GM12878 (cell line): ENCODE measurements at regions of chr10 and their contacts with region 1.

Region 1: DNA sequence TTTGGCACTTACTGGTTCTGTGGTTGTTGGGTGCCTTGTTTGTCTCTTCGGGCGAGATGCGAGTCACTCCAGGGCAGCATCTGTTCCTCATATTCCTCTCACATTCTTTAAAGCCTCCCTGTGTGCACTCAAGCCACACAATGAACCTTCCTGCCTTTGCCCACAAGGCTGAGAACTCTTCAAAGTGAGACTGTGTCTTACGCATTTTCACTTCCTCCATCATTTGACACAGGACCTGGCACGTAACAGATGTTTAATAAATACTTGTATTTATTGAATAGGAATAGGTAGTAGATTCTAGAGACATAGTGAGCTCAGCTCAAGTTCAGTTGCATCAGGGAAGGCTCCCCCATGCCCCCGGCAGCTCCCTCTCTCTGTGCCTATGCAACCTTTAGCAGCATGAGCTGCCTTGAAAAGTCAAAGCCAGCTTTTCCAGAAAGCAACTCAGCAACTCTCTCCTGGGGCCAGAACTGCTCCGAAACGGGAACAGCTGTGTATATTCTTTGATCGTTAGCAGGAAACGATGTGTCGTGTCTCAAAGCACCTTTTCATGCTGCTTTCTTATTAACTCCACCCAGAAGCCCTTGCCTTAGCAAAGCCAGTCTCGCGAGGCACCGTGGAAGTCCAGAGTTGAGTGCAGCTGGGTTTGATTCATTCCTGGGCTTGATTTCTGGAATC is 97.5 kb downstream of the PFKFB3 start:
- DNase-seq: peak; percentile 97
- ATAC-seq: peak; percentile 82
- H3K4me3 ChIP-seq: peak overlapping the region; percentile 34; the same call in 1 of the 2 replicates
- H3K27ac ChIP-seq: peak overlapping the region; percentile 70
- H3K4me1 ChIP-seq: peaks cover 31% of the 10 kb centered on the region
- H3K27me3 ChIP-seq: no peaks in the 10 kb centered on the region
- CTCF ChIP-seq: no peak
- EP300 ChIP-seq: peak; percentile 99 to 100
- POLR2A ChIP-seq: 0 out of 2 replicates have a peak, but pooled peaks have one; percentile 31
- RAD21 ChIP-seq: no peak; the same call in 1 of the 2 replicates

Region 2: GRCh38 chr10:6269953-6270867 is 30.0 kb before region 1 on chr10:
- CTCF ChIA-PET with region 1: interaction called, 12 read pairs
- POLR2A ChIA-PET with region 1: interaction called, 15 read pairs
- RAD21 ChIA-PET with region 1: interaction called, 37 read pairs
- SMC1A ChIA-PET with region 1: interaction called, 120 read pairs
- in situ Hi-C with region 1: no loop called
- intact Hi-C with region 1: loop called (anchors 1 kb)
- DNase-seq: peak; percentile 55
- ATAC-seq: peak; percentile 80
- H3K4me3 ChIP-seq: no peak overlapping the region
- H3K27ac ChIP-seq: peak overlapping the region; percentile 50
- H3K4me1 ChIP-seq: peaks cover 40% of the 10 kb centered on the region
- H3K27me3 ChIP-seq: no peaks in the 10 kb centered on the region
- CTCF ChIP-seq: no peak
- EP300 ChIP-seq: peak; percentile 98; a peak in 3 of 4 replicates
- POLR2A ChIP-seq: no peak
- RAD21 ChIP-seq: 0 out of 2 replicates have a peak, but pooled peaks have one; percentile 25

Region 3: DNA sequence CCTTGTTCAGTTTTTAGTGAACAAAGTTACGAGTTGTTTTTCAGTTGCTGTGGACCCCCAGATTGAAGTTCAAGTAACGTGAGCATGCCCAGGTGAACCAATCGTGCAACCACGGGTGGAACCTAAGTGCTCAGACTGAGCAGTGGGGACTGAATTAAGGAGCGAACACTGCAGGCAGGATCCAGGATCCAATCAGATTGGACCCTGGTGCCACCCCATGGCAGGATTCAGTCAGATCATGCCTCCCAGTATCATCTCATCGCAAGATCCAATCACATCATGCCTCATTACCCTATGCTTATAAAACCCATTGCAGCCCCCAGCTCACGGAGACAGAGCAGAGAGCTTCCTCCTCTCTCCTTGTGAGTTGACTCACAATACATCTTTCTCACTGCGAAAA is 16.6 kb before region 1 on chr10:
- CTCF ChIA-PET with region 1: interaction called, 3 read pairs
- POLR2A ChIA-PET with region 1: interaction called, 7 read pairs
- RAD21 ChIA-PET with region 1: interaction called, 5 read pairs
- SMC1A ChIA-PET with region 1: interaction called, 15 read pairs
- in situ Hi-C with region 1: no loop called
- intact Hi-C with region 1: no loop called
- DNase-seq: no peak
- ATAC-seq: no peak
- H3K4me3 ChIP-seq: no peak overlapping the region
- H3K27ac ChIP-seq: no peak overlapping the region
- H3K4me1 ChIP-seq: no peaks in the 10 kb centered on the region
- H3K27me3 ChIP-seq: peaks cover 0 to 4% of the 10 kb centered on the region in 2 experiments; a peak in 1 of 4 replicates
- CTCF ChIP-seq: no peak
- EP300 ChIP-seq: no peak
- POLR2A ChIP-seq: no peak
- RAD21 ChIP-seq: no peak

Region 4: GRCh38 chr10:6320320-6321010 is 20.2 kb after region 1 on chr10:
- CTCF ChIA-PET with region 1: interaction called, 9 read pairs
- POLR2A ChIA-PET with region 1: interaction called, 10 read pairs
- RAD21 ChIA-PET with region 1: interaction called, 9 read pairs
- SMC1A ChIA-PET with region 1: interaction called, 6 read pairs
- in situ Hi-C with region 1: no loop called
- intact Hi-C with region 1: no loop called
- DNase-seq: peak; percentile 45
- ATAC-seq: peak; percentile 98
- H3K4me3 ChIP-seq: no peak overlapping the region
- H3K27ac ChIP-seq: no peak overlapping the region
- H3K4me1 ChIP-seq: peaks cover 6% of the 10 kb centered on the region
- H3K27me3 ChIP-seq: no peaks in the 10 kb centered on the region
- CTCF ChIP-seq: no peak
- EP300 ChIP-seq: no peak
- POLR2A ChIP-seq: no peak
- RAD21 ChIP-seq: no peak

Region 5: GRCh38 chr10:6542999-6543430 is 242.8 kb after region 1 on chr10:
- CTCF ChIA-PET with region 1: no interaction called
- POLR2A ChIA-PET with region 1: no interaction called
- RAD21 ChIA-PET with region 1: no interaction called
- SMC1A ChIA-PET with region 1: no interaction called
- in situ Hi-C with region 1: no loop called
- intact Hi-C with region 1: no loop called
- DNase-seq: no peak
- ATAC-seq: peak; percentile 73
- H3K4me3 ChIP-seq: no peak overlapping the region
- H3K27ac ChIP-seq: no peak overlapping the region
- H3K4me1 ChIP-seq: peaks cover 6% of the 10 kb centered on the region
- H3K27me3 ChIP-seq: peaks cover under 1% of the 10 kb centered on the region in 2 experiments; a peak in 2 of 4 replicates
- CTCF ChIP-seq: no peak
- EP300 ChIP-seq: no peak
- POLR2A ChIP-seq: no peak
- RAD21 ChIP-seq: no peak